ENCODE measurements at regions of chrX and their contacts with region 1.

Region 1: GRCh38 chrX:30652527-30653414 is 452 bp upstream of the GK start:
- DNase-seq: peak; percentile 93
- H3K4me3 ChIP-seq: peak overlapping the region; percentile 15 to 81 (median 68)
- H3K27ac ChIP-seq: peak overlapping the region; percentile 47
- H3K4me1 ChIP-seq: peaks cover 11% of the 10 kb centered on the region
- H3K27me3 ChIP-seq: no peaks in the 10 kb centered on the region
- CTCF ChIP-seq: no peak
- POLR2A ChIP-seq: peak; percentile 22

Region 2: DNA sequence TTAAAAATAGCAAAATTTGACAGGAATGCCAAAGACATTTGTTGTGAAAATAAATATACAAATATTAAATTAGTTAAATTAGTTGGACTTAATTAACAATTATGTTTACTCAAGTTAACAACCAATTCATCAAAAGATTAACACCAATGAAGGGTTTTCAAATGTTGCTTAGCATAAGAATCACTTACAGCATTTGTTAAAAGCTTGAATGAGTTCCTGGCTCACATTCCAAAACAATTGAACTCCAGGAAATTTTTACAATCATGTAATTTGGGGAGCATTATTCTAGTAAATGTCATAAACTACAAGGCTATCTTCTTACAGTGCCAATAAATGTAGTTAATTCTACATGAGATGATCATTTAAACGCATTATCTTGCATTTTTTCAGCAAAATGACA is 687.1 kb before region 1 on chrX:
- CTCF ChIA-PET with region 1: no interaction called
- POLR2A ChIA-PET with region 1: no interaction called
- dilution Hi-C with region 1: no loop called
- intact Hi-C with region 1: no loop called
- DNase-seq: no peak
- H3K4me3 ChIP-seq: no peak overlapping the region
- H3K27ac ChIP-seq: no peak overlapping the region
- H3K4me1 ChIP-seq: no peaks in the 10 kb centered on the region
- H3K27me3 ChIP-seq: no peaks in the 10 kb centered on the region
- CTCF ChIP-seq: no peak
- POLR2A ChIP-seq: no peak

Region 3: DNA sequence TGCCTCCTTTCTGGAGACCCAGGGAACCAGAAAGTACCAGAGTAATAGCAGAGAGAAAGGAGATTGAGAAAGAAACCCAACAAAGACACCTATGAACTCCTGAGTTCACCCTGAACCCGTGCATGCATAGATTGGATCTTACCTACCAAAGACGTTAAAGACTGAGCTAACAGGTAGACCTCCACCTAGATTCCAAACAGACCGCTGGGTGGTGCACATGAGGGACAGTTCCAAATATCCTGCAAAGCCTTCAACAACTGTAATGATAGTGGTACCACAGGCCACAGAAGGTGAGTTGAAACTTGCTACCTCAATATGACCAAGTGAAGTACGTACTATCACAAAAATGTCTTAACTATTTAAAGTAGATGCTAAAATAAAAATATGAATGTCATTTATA is 309.6 kb before region 1 on chrX:
- CTCF ChIA-PET with region 1: no interaction called
- POLR2A ChIA-PET with region 1: no interaction called
- dilution Hi-C with region 1: no loop called
- intact Hi-C with region 1: no loop called
- DNase-seq: no peak
- H3K4me3 ChIP-seq: no peak overlapping the region
- H3K27ac ChIP-seq: no peak overlapping the region
- H3K4me1 ChIP-seq: no peaks in the 10 kb centered on the region
- H3K27me3 ChIP-seq: no peaks in the 10 kb centered on the region
- CTCF ChIP-seq: no peak
- POLR2A ChIP-seq: no peak

Region 4: DNA sequence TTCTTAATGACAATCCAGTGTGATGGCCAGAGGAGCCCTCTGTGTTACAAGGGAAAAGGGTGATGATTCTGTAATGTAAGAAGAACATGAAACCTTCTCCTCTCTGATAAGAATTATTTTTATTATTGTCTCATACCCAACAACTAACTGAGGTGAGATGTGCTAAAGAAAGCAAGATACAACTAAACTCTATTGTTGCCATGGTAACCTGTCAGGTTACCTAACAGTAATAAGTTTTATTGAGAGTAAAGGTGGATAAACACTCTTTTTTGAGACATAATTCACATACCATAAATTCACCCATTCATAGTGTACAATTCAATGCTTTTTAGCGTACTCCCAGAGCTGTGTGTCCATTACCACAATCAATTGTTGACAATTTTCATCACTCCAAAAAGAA is 211.2 kb before region 1 on chrX:
- CTCF ChIA-PET with region 1: no interaction called
- POLR2A ChIA-PET with region 1: no interaction called
- dilution Hi-C with region 1: no loop called
- intact Hi-C with region 1: no loop called
- DNase-seq: no peak
- H3K4me3 ChIP-seq: no peak overlapping the region
- H3K27ac ChIP-seq: no peak overlapping the region
- H3K4me1 ChIP-seq: no peaks in the 10 kb centered on the region
- H3K27me3 ChIP-seq: no peaks in the 10 kb centered on the region
- CTCF ChIP-seq: no peak
- POLR2A ChIP-seq: no peak

Region 5: GRCh38 chrX:30690330-30690729 is 37.6 kb after region 1 on chrX:
- CTCF ChIA-PET with region 1: no interaction called
- POLR2A ChIA-PET with region 1: no interaction called
- dilution Hi-C with region 1: no loop called
- intact Hi-C with region 1: loop called (anchors 5 kb)
- DNase-seq: peak; percentile 34
- H3K4me3 ChIP-seq: no peak overlapping the region
- H3K27ac ChIP-seq: no peak overlapping the region
- H3K4me1 ChIP-seq: peaks cover 7% of the 10 kb centered on the region
- H3K27me3 ChIP-seq: no peaks in the 10 kb centered on the region
- CTCF ChIP-seq: no peak
- POLR2A ChIP-seq: no peak

Region 6: GRCh38 chrX:30889147-30890140 is 236.7 kb after region 1 on chrX and contains the start of gene TAB3:
- CTCF ChIA-PET with region 1: no interaction called
- POLR2A ChIA-PET with region 1: no interaction called
- dilution Hi-C with region 1: no loop called
- intact Hi-C with region 1: loop called (anchors 2 kb)
- DNase-seq: peak; percentile 97
- H3K4me3 ChIP-seq: peak within 1 kb of the TSS; percentile 20 to 91 (median 86)
- H3K27ac ChIP-seq: peak within 1 kb of the TSS; percentile 22
- H3K4me1 ChIP-seq: peaks cover 2% of the 10 kb centered on the region
- H3K27me3 ChIP-seq: no peaks in the 10 kb centered on the region
- CTCF ChIP-seq: no peak
- POLR2A ChIP-seq: peak; percentile 55
- total RNA-seq, gene TAB3: 11.7 and 12.0 TPM in 2 replicates

Measured in endothelial cell of umbilical vein (primary cell).